ENCODE measurements at regions of chr13 and their contacts with region 1.

Region 1: GRCh38 chr13:109162248-109163053 is 533.0 kb downstream of the MYO16 start:
- DNase-seq: peak; percentile 98
- ATAC-seq: peak; percentile 84
- H3K4me3 ChIP-seq: peak overlapping the region; percentile 62
- H3K27ac ChIP-seq: peak overlapping the region; percentile 86
- H3K4me1 ChIP-seq: peaks cover 29% of the 10 kb centered on the region
- H3K27me3 ChIP-seq: no peaks in the 10 kb centered on the region
- CTCF ChIP-seq: 0 out of 6 replicates have a peak, but pooled peaks of 1 of the 3 experiments have one; percentile 4
- EP300 ChIP-seq: peak; percentile 99
- POLR2A ChIP-seq: no peak
- RAD21 ChIP-seq: 0 out of 2 replicates have a peak, but pooled peaks have one; percentile 15

Region 2: GRCh38 chr13:108944760-108945159 is 217.7 kb before region 1 on chr13:
- CTCF ChIA-PET with region 1: no interaction called
- POLR2A ChIA-PET with region 1: no interaction called
- RAD21 ChIA-PET with region 1: no interaction called
- SMC1A ChIA-PET with region 1: no interaction called
- in situ Hi-C with region 1: no loop called
- intact Hi-C with region 1: no loop called
- DNase-seq: no peak
- ATAC-seq: no peak
- H3K4me3 ChIP-seq: no peak overlapping the region
- H3K27ac ChIP-seq: no peak overlapping the region
- H3K4me1 ChIP-seq: no peaks in the 10 kb centered on the region
- H3K27me3 ChIP-seq: no peaks in the 10 kb centered on the region; a peak in 1 of 4 replicates
- CTCF ChIP-seq: no peak
- EP300 ChIP-seq: no peak
- POLR2A ChIP-seq: no peak
- RAD21 ChIP-seq: no peak

Region 3: GRCh38 chr13:109131698-109132257 is 30.7 kb before region 1 on chr13:
- CTCF ChIA-PET with region 1: interaction called, 3 read pairs
- POLR2A ChIA-PET with region 1: interaction called, 4 read pairs
- RAD21 ChIA-PET with region 1: interaction called, 35 read pairs
- SMC1A ChIA-PET with region 1: interaction called, 39 read pairs
- in situ Hi-C with region 1: no loop called
- intact Hi-C with region 1: no loop called
- DNase-seq: peak; percentile 77
- ATAC-seq: peak; percentile 87
- H3K4me3 ChIP-seq: no peak overlapping the region
- H3K27ac ChIP-seq: peak overlapping the region; percentile 42; the same call in 1 of the 2 replicates
- H3K4me1 ChIP-seq: peaks cover 14% of the 10 kb centered on the region
- H3K27me3 ChIP-seq: no peaks in the 10 kb centered on the region
- CTCF ChIP-seq: no peak
- EP300 ChIP-seq: peak; percentile 51 to 70; a peak in 1 of 4 replicates
- POLR2A ChIP-seq: no peak
- RAD21 ChIP-seq: no peak

Region 4: GRCh38 chr13:109211616-109212015 is 49.2 kb after region 1 on chr13:
- CTCF ChIA-PET with region 1: no interaction called
- POLR2A ChIA-PET with region 1: no interaction called
- RAD21 ChIA-PET with region 1: interaction called, 11 read pairs
- SMC1A ChIA-PET with region 1: interaction called, 14 read pairs
- in situ Hi-C with region 1: no loop called
- intact Hi-C with region 1: no loop called
- DNase-seq: no peak
- ATAC-seq: no peak
- H3K4me3 ChIP-seq: no peak overlapping the region
- H3K27ac ChIP-seq: no peak overlapping the region
- H3K4me1 ChIP-seq: no peaks in the 10 kb centered on the region
- H3K27me3 ChIP-seq: no peaks in the 10 kb centered on the region
- CTCF ChIP-seq: no peak
- EP300 ChIP-seq: no peak
- POLR2A ChIP-seq: no peak
- RAD21 ChIP-seq: no peak

Region 5: DNA sequence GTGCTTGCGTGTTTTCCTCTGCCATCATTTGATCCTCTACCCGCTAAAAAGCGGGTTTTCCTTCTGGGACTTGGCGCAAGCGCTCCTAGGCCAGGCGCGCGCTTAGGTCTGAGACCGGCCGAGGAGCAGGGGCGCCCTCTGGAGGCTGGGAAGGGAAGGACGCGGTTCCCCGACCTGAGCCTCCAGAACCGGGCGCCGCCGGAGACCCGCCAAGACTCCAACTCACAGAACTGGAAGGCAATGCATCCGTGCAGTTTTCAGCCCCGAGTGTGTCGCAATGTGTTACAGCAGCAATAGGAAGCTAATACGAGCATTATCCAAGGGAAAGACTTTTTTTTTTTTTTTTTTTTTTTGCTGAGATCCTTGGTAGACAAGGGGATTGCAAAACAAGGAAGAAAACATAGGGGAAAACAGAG is 953.6 kb after region 1 on chr13:
- CTCF ChIA-PET with region 1: no interaction called
- POLR2A ChIA-PET with region 1: no interaction called
- RAD21 ChIA-PET with region 1: interaction called, 4 read pairs
- SMC1A ChIA-PET with region 1: no interaction called
- in situ Hi-C with region 1: no loop called
- intact Hi-C with region 1: loop called (anchors 2 kb)
- DNase-seq: no peak
- ATAC-seq: peak; percentile 85
- H3K4me3 ChIP-seq: no peak overlapping the region
- H3K27ac ChIP-seq: no peak overlapping the region
- H3K4me1 ChIP-seq: no peaks in the 10 kb centered on the region; the same call in 1 of the 2 replicates
- H3K27me3 ChIP-seq: peaks cover 0 to 2% of the 10 kb centered on the region in 2 experiments; a peak in 1 of 4 replicates
- CTCF ChIP-seq: peak; percentile 71 to 98 (median 88)
- EP300 ChIP-seq: no peak
- POLR2A ChIP-seq: no peak
- RAD21 ChIP-seq: peak; percentile 65

Region 6: DNA sequence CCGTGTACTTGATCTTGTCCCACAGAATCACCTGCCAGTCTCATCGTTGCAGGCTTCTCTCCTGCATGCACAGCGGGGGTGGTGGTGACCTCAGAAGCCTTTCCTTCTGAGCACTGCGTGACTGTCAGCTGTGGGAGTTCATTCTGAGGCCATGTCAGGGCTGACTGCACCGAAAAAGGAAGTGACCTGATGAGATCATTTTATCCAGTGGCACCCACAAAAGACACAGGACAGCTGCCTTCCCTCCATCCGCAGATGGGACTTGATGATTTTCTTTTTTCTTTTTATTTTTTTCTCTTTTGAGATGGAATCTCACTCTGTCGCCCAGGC is 1309.3 kb after region 1 on chr13:
- CTCF ChIA-PET with region 1: no interaction called
- POLR2A ChIA-PET with region 1: no interaction called
- RAD21 ChIA-PET with region 1: no interaction called
- SMC1A ChIA-PET with region 1: no interaction called
- in situ Hi-C with region 1: loop called (anchors 5 kb)
- intact Hi-C with region 1: no loop called
- DNase-seq: peak; percentile 87
- ATAC-seq: peak; percentile 96
- H3K4me3 ChIP-seq: peak overlapping the region; percentile 42; the same call in 1 of the 2 replicates
- H3K27ac ChIP-seq: peak overlapping the region; percentile 60
- H3K4me1 ChIP-seq: peaks cover 37% of the 10 kb centered on the region
- H3K27me3 ChIP-seq: no peaks in the 10 kb centered on the region
- CTCF ChIP-seq: no peak
- EP300 ChIP-seq: peak; percentile 100
- POLR2A ChIP-seq: peak; percentile 68
- RAD21 ChIP-seq: peak; percentile 3; the same call in 1 of the 2 replicates